ENCODE measurements at regions of chr17 and their contacts with region 1.

Region 1: GRCh38 chr17:13002766-13003451 is 14.9 kb downstream of the ELAC2 start:
- DNase-seq: peak; percentile 74 to 80
- ATAC-seq: peak; percentile 91 to 96
- H3K4me3 ChIP-seq: no peak overlapping the region
- H3K27ac ChIP-seq: no peak overlapping the region
- H3K4me1 ChIP-seq: no peaks in the 10 kb centered on the region
- CTCF ChIP-seq: peak; percentile 96
- EP300 ChIP-seq: no peak
- POLR2A ChIP-seq: no peak
- RAD21 ChIP-seq: peak; percentile 88

Region 2: GRCh38 chr17:12180644-12181261 is 822.2 kb before region 1 on chr17:
- CTCF ChIA-PET with region 1: interaction called, 58 read pairs
- POLR2A ChIA-PET with region 1: no interaction called
- DNase-seq: peak; percentile 27 to 74
- ATAC-seq: peak; percentile 67 to 89
- H3K4me3 ChIP-seq: no peak overlapping the region
- H3K27ac ChIP-seq: peak overlapping the region; percentile 15 to 16; a peak in 3 of 6 replicates
- H3K4me1 ChIP-seq: peaks cover 4% of the 10 kb centered on the region; the same call in 2 of the 3 replicates
- CTCF ChIP-seq: peak; percentile 99
- EP300 ChIP-seq: no peak
- POLR2A ChIP-seq: no peak
- RAD21 ChIP-seq: peak; percentile 95 to 98

Region 3: GRCh38 chr17:12256380-12256995 is 746.4 kb before region 1 on chr17:
- CTCF ChIA-PET with region 1: interaction called, 33 read pairs
- POLR2A ChIA-PET with region 1: no interaction called
- DNase-seq: peak; percentile 55 to 75
- ATAC-seq: peak; percentile 73 to 91; a peak in 4 of 6 replicates
- H3K4me3 ChIP-seq: no peak overlapping the region
- H3K27ac ChIP-seq: peak overlapping the region; percentile 41 to 54; a peak in 5 of 6 replicates
- H3K4me1 ChIP-seq: peaks cover 9% of the 10 kb centered on the region; the same call in 2 of the 3 replicates
- CTCF ChIP-seq: peak; percentile 98
- EP300 ChIP-seq: no peak
- POLR2A ChIP-seq: no peak
- RAD21 ChIP-seq: peak; percentile 94 to 98

Region 4: DNA sequence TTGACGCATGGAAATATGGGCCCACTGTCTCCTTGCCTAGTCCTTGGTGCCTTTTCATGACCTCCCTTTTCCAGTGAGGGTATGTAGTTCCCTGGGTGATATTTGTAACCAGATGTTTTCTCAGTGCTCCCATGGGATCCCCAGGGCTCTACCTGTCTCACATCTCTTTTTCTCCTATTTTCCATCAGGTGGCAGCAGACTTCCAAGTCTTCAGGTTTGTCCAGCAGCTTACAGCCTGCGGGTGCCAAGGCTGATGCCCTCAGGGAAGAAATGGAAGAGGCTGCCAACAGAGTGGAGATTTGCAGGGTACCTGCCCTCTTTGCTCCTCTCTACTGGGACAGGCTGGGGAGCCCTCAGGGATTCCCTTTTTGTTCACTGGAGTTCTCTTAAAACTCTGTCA is 74.2 kb before region 1 on chr17:
- CTCF ChIA-PET with region 1: interaction called, 20 read pairs
- POLR2A ChIA-PET with region 1: no interaction called
- DNase-seq: peak in 1 of 2 experiments; percentile 25
- ATAC-seq: peak; percentile 84 to 88
- H3K4me3 ChIP-seq: no peak overlapping the region
- H3K27ac ChIP-seq: no peak overlapping the region
- H3K4me1 ChIP-seq: no peaks in the 10 kb centered on the region
- CTCF ChIP-seq: peak; percentile 47
- EP300 ChIP-seq: no peak
- POLR2A ChIP-seq: no peak
- RAD21 ChIP-seq: peak; percentile 48 to 49; a peak in 4 of 5 replicates

Region 5: GRCh38 chr17:12967962-12968361 is 34.9 kb before region 1 on chr17:
- CTCF ChIA-PET with region 1: interaction called, 13 read pairs
- POLR2A ChIA-PET with region 1: no interaction called
- DNase-seq: no peak
- ATAC-seq: no peak
- H3K4me3 ChIP-seq: no peak overlapping the region
- H3K27ac ChIP-seq: no peak overlapping the region
- H3K4me1 ChIP-seq: no peaks in the 10 kb centered on the region
- CTCF ChIP-seq: no peak
- EP300 ChIP-seq: no peak
- POLR2A ChIP-seq: no peak
- RAD21 ChIP-seq: no peak

Region 6: DNA sequence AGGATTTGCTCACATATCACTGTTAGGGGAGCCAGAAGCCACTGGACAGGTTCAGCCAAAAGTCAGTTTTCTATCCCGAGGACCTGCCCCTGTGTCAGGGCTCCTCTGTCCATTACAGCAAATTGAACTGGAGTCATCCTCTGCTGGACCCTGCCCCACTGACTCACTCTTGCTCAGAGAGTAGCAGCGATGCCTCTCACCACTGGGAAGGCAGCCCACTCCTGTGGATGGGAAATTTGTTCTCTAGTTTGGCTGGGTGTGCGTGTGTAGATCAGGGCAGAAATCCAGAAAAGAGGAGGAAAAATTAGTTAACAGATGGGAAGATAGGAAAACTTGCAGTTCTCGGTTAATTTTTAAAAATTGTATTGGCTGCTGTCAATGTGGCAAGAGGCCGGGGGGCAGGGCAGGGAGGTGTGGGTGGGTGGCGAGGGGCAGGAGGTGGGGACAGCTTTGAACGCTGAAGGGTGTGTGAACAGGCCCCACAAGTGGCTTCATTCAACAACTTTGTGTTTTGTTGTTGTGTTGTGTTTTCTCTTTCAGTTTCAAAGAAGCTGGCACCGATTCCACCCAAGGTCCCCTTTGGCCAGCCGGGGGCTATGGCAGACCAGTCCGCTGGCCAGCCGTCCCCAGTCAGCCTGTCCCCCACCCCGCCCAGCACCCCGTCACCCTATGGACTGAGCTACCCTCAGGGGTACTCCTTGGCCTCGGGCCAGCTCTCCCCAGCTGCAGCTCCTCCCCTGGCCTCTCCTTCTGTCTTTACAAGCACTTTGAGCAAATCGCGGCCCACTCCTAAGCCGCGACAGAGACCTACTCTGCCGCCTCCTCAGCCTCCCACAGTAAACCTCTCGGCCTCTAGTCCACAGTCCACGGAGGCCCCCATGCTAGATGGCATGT is 18.7 kb before region 1 on chr17:
- CTCF ChIA-PET with region 1: interaction called, 79 read pairs
- POLR2A ChIA-PET with region 1: no interaction called
- DNase-seq: no peak
- ATAC-seq: peak in 1 of 2 experiments; percentile 55; a peak in 3 of 6 replicates
- H3K4me3 ChIP-seq: no peak overlapping the region
- H3K27ac ChIP-seq: no peak overlapping the region
- H3K4me1 ChIP-seq: no peaks in the 10 kb centered on the region
- CTCF ChIP-seq: no peak
- EP300 ChIP-seq: no peak
- POLR2A ChIP-seq: no peak
- RAD21 ChIP-seq: no peak

Region 7: DNA sequence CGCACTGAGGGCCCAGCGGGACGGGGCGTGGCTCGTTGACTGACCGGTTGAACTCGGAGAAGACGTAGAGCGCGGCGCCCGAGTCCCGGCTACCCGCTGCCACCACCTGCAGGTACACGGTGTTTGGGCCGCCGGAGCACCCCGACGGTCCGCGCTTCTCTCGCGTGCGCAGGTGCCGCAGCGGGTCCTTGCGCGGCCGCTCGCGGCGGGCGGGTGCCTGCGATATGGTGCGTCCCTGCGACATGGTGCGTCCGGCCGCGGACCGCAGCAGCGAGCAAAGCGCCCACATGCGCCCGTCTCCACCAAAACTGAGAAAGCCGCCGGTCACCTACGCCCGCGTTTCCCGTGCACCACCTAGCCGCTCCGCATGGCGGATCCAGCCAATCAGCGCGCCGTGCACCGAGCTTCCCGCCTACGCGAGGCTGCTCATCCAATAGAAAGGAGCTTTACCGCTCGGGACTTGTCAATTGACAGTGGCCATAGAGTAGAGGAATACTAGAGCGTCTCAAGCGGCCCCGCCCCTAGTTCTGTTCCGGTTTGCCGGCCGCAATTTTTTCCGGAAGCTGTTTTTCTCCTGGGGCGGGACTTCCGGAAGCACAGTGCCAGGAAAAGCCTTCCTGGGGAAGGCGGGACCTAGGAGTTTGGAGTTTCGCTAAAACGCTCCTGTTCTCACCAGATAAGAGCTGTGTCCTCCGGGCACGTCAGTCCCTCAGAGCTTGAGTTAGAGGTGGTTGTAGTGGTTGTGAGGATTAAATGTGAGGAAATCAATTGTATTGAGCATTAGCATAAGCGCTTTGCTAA is 14.9 kb after region 1 on chr17 and contains the start of gene ELAC2:
- CTCF ChIA-PET with region 1: interaction called, 51 read pairs
- POLR2A ChIA-PET with region 1: interaction called, 11 read pairs
- DNase-seq: peak; percentile 98 to 99
- ATAC-seq: peak; percentile 96 to 99
- H3K4me3 ChIP-seq: peak within 1 kb of the TSS; percentile 80
- H3K27ac ChIP-seq: peak within 1 kb of the TSS; percentile 85 to 91
- H3K4me1 ChIP-seq: peaks cover 13% of the 10 kb centered on the region
- CTCF ChIP-seq: no peak
- EP300 ChIP-seq: no peak
- POLR2A ChIP-seq: peak; percentile 90
- RAD21 ChIP-seq: no peak
- polyA plus RNA-seq, gene ELAC2: 97.9 and 103 TPM in 2 replicates

Region 8: GRCh38 chr17:13204574-13205219 is 201.8 kb after region 1 on chr17:
- CTCF ChIA-PET with region 1: no interaction called
- POLR2A ChIA-PET with region 1: no interaction called
- DNase-seq: no peak
- ATAC-seq: no peak
- H3K4me3 ChIP-seq: no peak overlapping the region
- H3K27ac ChIP-seq: no peak overlapping the region
- H3K4me1 ChIP-seq: no peaks in the 10 kb centered on the region
- CTCF ChIP-seq: no peak
- EP300 ChIP-seq: no peak
- POLR2A ChIP-seq: no peak
- RAD21 ChIP-seq: no peak

Measured in A549 (cell line).